ENCODE measurements at regions of chr5 and their contacts with region 1.

Region 1: DNA sequence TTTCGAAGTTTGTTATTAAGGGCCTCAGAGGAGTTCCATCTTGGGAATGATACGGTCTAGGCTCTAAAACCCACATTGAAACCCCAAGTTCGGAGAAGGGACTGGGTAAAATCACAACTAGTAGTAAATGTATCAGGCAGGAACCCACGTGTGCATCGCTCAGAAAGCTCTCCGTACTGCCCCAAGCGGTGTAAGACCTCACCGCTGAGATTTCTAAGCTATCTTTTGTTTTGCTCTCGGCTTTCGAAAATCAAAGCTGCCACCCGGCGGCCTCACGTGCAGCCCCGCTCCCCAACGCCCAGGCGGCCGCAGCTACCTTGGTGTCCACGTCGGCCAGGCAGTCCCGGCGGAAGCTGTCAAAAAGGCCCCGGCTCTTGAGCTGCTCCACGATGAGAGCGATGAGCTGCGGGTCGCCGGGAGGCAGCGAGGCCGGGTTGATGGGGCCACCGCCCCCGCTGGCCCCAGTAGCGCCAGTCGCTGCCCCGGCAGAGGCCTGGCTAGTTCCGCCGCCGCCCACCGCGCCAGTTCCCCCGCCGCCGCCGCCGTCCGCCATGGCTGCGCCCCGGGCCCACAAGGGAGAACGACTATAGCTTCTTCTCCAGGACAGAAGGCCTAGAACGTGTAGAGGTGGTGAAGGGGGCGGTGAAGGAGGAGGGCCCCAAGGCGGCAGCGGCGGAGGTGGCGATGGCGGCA is 420 bp downstream of the BOD1 start:
- DNase-seq: peak; percentile 37 to 93 (median 57)

Region 2: GRCh38 chr5:173972925-173973615 is 357.0 kb after region 1 on chr5:
- intact Hi-C with region 1: loop called (anchors 1 kb)
- DNase-seq: peak; percentile 75 to 97 (median 89)

Region 3: GRCh38 chr5:174317259-174317894 is 701.3 kb after region 1 on chr5:
- intact Hi-C with region 1: loop called (anchors 5 kb)
- DNase-seq: peak; percentile 46 to 96 (median 69)